Right ventricle myocardium inferior (tissue), 1 donor: ENCODE measurements at regions of chr16 and their contacts with region 1.

Region 1: DNA sequence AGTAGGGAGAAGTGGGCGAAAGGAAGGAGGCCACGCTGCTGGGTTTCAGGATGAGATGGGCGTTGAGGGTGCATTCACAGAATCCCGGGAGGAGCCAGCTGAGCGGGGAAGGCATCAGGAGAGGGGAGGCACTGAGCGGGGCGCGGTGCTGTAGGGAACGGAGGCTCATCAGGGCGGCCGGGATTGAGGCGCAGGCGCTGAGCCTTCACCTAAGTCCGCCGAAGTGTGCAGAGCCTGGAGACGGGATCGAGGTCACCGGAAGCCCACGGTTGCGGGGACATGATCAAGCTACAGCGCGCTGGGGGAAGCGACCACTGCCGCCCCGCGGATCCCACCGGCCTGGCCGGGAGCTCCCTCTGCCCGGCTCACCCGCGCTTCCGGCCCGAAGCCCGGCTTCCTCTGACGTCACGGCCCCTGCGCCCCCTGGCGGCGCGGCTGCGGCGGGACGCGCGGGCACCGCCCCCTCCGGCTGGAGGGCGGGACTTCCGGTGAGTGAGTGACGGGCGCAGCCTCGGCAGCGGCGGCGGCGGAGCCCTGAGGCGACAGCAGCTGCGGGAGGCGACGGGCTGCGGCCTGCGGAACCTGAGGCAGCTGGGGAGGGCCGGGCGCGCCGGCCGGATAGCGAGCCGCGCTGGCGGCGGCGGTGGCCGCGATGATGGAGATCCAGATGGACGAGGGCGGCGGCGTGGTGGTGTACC is at the start of gene MAPK8IP3:
- DNase-seq: peak; percentile 95
- ATAC-seq: peak; percentile 95
- total RNA-seq, gene MAPK8IP3: 66.4 TPM

Region 2: GRCh38 chr16:1428511-1428910 is 277.3 kb before region 1 on chr16:
- intact Hi-C with region 1: loop called (anchors 10 kb)
- DNase-seq: no peak
- ATAC-seq: no peak

Region 3: DNA sequence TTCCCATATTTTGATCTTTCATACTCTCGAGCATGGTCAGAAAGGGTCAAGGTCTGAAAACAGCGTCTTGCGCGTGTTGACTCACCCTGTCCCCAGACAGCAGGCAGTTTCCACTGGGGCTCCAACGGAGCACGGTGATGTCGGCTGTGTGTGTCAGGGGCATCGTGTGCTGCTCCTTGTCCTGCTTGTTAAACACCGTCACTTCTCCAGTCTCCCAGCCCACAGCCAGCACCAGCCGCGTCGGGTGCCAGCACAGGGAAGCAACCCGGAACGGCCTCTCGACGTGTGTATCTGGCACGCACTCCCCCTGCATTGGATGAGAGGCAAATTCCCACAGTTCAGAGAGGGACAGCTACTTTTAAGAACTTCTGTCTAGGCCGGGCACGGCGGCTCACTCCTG is 103.6 kb before region 1 on chr16:
- intact Hi-C with region 1: no loop called
- DNase-seq: no peak
- ATAC-seq: no peak

Region 4: DNA sequence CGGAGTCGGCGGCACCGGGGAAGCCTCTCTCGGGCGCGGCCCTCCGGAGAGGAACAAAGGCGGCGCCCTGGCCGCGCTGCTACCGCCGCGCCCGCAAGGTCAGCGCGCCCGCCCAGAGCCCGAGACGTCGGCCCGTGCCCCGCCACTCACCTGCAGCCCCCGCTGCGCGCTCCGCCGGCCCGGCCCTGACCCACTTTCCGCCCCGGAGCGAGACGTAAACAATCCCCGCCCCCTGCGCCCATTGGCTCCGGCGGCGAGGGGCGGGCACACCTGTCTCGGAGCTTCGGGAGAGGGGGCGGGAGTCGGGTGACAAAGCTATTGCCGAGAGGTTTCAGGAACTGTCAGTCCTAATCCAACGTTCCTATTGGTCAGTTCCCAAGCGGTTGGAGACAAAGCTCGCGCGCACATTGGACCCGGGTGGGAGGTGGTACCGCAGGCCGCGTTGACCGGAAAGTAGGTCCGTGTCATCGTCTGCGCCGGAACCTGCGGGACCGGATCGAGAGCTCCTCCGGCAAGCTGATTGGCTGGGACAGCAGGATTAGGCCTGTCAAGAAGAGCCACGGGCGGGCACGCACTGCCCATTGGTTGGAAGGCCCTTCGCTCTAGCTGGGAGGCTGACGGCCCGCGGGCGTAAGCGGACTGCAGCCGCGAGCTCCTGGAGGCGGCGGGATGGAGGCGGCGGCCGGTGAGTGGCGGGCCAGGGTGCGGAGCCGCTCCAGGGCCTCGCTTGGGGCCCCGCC is 76.7 kb after region 1 on chr16 and contains the starts of genes NUBP2 and SPSB3:
- intact Hi-C with region 1: loop called (anchors 5 kb)
- DNase-seq: peak; percentile 100
- ATAC-seq: peak; percentile 96
- total RNA-seq, gene NUBP2: 37.9 TPM
- total RNA-seq, gene SPSB3: 36.1 TPM

Region 5: DNA sequence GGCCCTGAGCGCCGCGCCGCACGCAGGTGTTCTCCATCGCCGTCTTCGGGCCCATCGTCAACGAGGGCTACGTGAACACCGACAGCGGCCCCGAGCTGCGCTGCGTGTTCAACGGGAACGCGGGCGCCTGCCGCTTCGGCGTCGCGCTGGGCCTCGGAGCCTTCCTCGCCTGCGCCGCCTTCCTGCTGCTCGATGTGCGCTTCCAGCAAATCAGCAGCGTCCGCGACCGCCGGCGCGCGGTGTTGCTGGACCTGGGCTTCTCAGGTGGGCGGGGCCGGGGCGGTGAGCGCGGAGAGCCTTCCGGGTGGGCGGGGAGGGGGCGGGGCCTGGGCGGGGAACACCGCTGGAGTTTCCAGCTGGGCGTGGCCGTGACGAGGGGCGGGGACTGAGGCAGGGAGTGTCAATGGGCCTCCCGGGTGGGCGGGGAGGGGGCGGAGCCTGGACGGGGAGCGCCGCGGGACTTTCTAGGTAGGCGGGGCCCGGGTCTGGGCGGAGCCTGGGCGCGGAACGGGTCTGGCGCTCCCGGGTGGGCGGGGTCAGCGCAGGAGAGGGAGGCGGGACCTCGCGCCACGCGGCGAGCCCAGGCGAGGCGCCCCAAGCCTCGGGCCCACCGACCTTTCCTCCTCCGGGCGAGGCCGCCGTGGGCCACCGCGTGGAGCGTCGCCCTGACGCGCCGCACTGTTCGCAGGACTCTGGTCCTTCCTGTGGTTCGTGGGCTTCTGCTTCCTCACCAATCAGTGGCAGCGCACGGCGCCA is 286.3 kb after region 1 on chr16:
- intact Hi-C with region 1: no loop called
- DNase-seq: peak; percentile 98
- ATAC-seq: peak; percentile 92